ENCODE measurements at regions of chr2 and their contacts with region 1.

Region 1: DNA sequence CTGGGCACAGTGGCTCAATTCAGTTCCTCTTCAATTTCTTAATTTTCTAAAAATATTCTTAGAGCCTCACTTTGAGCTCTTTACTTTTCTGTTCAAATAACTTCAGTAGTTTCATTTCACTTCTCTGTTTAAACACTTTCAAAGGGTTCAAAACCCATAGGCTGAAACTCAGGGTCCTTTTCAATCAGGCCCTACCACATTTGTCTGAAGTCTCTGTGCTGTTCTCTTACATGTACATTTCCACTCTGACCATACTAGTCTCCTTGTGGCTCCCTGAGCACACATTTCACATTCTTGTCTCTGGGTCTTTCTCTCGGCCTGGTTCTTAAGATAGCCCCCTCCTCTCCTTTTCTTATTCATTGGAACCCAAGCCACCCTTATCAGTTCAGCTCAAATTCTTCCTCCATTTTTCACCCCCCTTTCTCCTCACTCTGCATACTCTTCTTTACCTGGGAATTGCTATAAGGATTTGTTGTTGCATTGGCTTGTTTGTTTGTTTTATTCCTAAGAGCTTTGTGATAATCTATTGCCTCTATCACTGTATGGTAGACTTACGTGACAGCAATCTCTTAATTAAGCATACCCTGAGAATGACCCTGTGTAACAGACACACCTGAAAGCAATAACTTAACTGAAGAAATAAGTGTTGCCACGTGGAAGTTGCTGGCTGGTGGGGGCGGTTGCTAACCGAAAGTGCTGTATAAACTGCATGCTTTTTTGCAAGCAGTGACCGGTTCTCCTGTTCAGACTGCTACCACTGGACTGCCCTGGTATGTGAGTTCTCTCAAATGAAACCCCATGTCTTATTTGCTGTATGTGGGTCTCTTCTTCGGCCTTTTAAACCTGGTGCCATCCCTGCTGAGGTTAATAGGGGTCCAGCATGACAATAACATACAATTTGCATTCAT is 27.7 kb upstream of the ACADL start:
- DNase-seq: no peak
- H3K4me3 ChIP-seq: no peak overlapping the region
- H3K27ac ChIP-seq: no peak overlapping the region
- H3K4me1 ChIP-seq: no peaks in the 10 kb centered on the region
- H3K27me3 ChIP-seq: no peaks in the 10 kb centered on the region
- CTCF ChIP-seq: no peak

Region 2: DNA sequence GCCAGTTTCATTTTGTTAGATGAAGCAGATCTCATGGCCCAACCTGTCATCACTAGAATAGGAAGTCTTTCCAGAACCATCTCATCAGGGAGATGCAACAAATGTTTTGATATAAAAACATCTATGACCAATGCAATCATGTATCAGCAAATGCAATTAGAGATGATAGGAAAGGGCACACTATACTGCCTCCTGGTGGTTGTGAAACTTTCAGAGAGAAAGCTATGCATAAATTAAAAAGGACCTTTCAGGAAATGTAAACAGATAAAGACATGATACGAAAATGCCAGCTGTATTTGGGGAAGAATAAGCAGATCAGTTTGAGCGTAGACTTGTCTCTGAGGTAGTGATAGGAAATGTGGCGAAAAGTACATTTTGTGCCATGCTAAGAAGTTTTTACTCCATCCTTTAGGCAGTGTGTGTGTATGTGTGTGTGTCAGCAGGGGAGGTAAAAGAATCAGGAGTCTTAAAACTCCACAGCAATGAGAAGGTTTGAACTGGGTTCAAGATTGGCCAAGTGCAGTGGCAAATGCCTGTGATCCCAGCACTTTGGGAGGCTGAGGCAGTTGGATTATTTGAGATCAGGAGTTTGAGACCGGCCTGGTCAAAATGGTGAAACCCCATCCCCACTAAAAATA is 782.7 kb after region 1 on chr2:
- CTCF ChIA-PET with region 1: no interaction called
- POLR2A ChIA-PET with region 1: interaction called, 31 read pairs
- intact Hi-C with region 1: no loop called
- DNase-seq: no peak
- H3K4me3 ChIP-seq: no peak overlapping the region
- H3K27ac ChIP-seq: no peak overlapping the region
- H3K4me1 ChIP-seq: no peaks in the 10 kb centered on the region
- H3K27me3 ChIP-seq: no peaks in the 10 kb centered on the region
- CTCF ChIP-seq: peak; percentile 56

Measured in PC-9 (cell line).